SK-N-SH (cell line): ENCODE measurements at regions of chr16 and their contacts with region 1.

Region 1: GRCh38 chr16:8567750-8568617 is 22.3 kb downstream of the TMEM114 start:
- DNase-seq: peak; percentile 85
- H3K4me3 ChIP-seq: peak overlapping the region in 1 of 2 experiments; percentile 39; a peak in 1 of 4 replicates
- H3K27ac ChIP-seq: no peak overlapping the region
- H3K4me1 ChIP-seq: peaks cover 3 to 11% of the 10 kb centered on the region in 2 experiments; a peak in 2 of 4 replicates
- H3K27me3 ChIP-seq: no peaks in the 10 kb centered on the region
- CTCF ChIP-seq: peak; percentile 98
- EP300 ChIP-seq: no peak
- RAD21 ChIP-seq: peak; percentile 99

Region 2: DNA sequence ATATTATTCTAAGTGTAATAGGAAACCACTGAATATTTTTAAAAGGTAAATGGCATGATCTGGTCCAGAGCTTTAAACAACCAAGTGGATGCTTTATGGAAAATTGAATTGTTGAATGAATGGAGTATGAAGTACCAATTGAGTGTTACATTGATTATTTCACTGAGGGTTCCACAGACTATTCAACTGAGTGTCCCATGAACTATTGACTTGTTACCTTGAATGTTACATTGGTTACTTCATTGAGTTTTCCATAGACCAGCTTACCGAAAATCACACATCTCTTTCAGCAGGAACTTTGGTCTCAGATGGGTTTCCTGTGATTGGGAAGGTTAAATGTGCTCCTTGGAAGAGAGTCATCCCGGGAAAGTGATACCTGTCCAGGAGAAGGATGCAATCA is 34.5 kb before region 1 on chr16:
- CTCF ChIA-PET with region 1: no interaction called
- POLR2A ChIA-PET with region 1: no interaction called
- DNase-seq: no peak
- H3K4me3 ChIP-seq: no peak overlapping the region
- H3K27ac ChIP-seq: no peak overlapping the region
- H3K4me1 ChIP-seq: no peaks in the 10 kb centered on the region
- H3K27me3 ChIP-seq: no peaks in the 10 kb centered on the region
- CTCF ChIP-seq: no peak
- EP300 ChIP-seq: no peak
- RAD21 ChIP-seq: no peak

Region 3: DNA sequence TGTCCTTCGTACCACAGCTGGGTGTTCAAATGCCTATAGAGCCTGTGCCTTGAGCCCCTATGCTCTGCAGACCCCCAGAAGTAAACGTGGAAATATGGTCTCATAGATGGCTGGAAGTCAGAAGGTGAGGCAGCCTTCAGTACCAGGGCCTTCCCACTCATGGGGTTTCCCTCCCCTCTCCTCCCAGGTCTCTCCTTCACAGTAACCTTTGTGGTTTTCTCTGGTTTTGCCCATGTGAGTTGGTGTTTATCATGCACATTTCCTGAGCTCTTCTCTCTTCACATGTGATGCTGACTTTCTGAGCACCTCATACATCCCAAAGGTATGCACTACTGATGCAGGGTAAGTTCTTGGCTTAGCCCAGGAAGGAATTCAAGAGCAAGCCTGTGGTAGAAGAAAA is 13.1 kb before region 1 on chr16:
- CTCF ChIA-PET with region 1: interaction called, 31 read pairs
- POLR2A ChIA-PET with region 1: no interaction called
- DNase-seq: no peak
- H3K4me3 ChIP-seq: no peak overlapping the region
- H3K27ac ChIP-seq: no peak overlapping the region
- H3K4me1 ChIP-seq: no peaks in the 10 kb centered on the region
- H3K27me3 ChIP-seq: no peaks in the 10 kb centered on the region
- CTCF ChIP-seq: no peak
- EP300 ChIP-seq: no peak
- RAD21 ChIP-seq: no peak

Region 4: GRCh38 chr16:8581831-8582580 is 14.0 kb after region 1 on chr16:
- CTCF ChIA-PET with region 1: interaction called, 17 read pairs
- POLR2A ChIA-PET with region 1: no interaction called
- DNase-seq: no peak
- H3K4me3 ChIP-seq: no peak overlapping the region
- H3K27ac ChIP-seq: no peak overlapping the region
- H3K4me1 ChIP-seq: no peaks in the 10 kb centered on the region
- H3K27me3 ChIP-seq: peaks cover 6% of the 10 kb centered on the region; the same call in 1 of the 2 replicates
- CTCF ChIP-seq: no peak
- EP300 ChIP-seq: no peak
- RAD21 ChIP-seq: no peak

Region 5: GRCh38 chr16:8634991-8635736 is 67.2 kb after region 1 on chr16:
- CTCF ChIA-PET with region 1: interaction called, 15 read pairs
- POLR2A ChIA-PET with region 1: no interaction called
- DNase-seq: peak; percentile 60
- H3K4me3 ChIP-seq: no peak overlapping the region; a peak in 1 of 4 replicates
- H3K27ac ChIP-seq: no peak overlapping the region; a peak in 1 of 4 replicates
- H3K4me1 ChIP-seq: peaks cover 0 to 5% of the 10 kb centered on the region in 2 experiments; a peak in 1 of 4 replicates
- H3K27me3 ChIP-seq: no peaks in the 10 kb centered on the region
- CTCF ChIP-seq: peak; percentile 70
- EP300 ChIP-seq: no peak
- RAD21 ChIP-seq: peak; percentile 61

Region 6: GRCh38 chr16:8655184-8655717 is 87.3 kb after region 1 on chr16:
- CTCF ChIA-PET with region 1: interaction called, 27 read pairs
- POLR2A ChIA-PET with region 1: no interaction called
- DNase-seq: no peak
- H3K4me3 ChIP-seq: no peak overlapping the region
- H3K27ac ChIP-seq: no peak overlapping the region
- H3K4me1 ChIP-seq: peaks cover 0 to 3% of the 10 kb centered on the region in 2 experiments; a peak in 1 of 4 replicates
- H3K27me3 ChIP-seq: no peaks in the 10 kb centered on the region
- CTCF ChIP-seq: peak; percentile 38
- EP300 ChIP-seq: no peak
- RAD21 ChIP-seq: peak; percentile 36

Region 7: DNA sequence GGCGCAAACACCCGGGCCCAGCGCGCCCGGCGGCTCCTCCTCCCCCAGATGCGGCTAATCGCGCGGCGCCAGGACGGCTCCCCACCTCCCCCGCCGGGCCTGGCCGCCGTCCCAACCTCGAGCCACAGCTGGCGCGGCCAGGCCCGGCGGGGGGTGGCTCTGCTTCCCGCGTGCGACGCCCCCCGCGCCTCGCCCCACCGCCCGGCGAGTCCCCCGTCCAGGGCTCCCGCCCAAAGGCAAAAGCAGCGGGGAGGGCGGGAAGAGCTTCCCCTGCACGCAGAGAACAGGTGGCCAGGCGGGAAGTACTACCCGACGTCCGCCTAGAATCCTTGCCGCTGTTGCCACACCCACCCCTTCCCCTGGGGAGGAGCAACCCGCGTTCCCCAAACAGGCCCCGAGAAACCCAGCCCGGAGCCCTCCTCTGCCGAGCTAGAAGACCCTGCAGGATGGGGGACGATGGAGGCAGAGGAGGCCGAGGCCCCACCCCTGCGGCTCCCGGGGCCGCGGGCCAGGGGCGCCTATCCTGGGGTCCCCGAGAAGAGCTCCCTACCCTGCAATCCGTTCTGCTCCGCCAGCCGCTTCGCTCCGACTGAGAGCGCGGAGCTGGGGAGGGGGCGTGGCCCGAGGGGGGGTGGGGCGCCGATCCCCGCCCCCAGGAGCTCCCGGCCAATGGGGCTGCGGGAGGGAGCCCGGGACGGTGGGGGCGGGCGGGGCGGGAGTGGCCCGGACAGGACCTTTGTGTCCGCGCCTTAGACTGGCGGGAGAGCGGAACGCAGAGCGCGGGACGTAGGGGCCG is 300.6 kb after region 1 on chr16 and contains the start of gene CARHSP1:
- CTCF ChIA-PET with region 1: interaction called, 13 read pairs
- POLR2A ChIA-PET with region 1: no interaction called
- DNase-seq: peak; percentile 99
- H3K4me3 ChIP-seq: peak within 1 kb of the TSS; percentile 62 to 81
- H3K27ac ChIP-seq: peak within 1 kb of the TSS; percentile 77 to 83
- H3K4me1 ChIP-seq: peaks cover 26 to 31% of the 10 kb centered on the region in 2 experiments; a peak in 2 of 4 replicates
- H3K27me3 ChIP-seq: no peaks in the 10 kb centered on the region
- CTCF ChIP-seq: no peak
- EP300 ChIP-seq: peak in 1 of 2 experiments; percentile 35; a peak in 1 of 4 replicates
- RAD21 ChIP-seq: no peak
- polyA plus RNA-seq, gene CARHSP1: 60.6 and 93.6 TPM in 2 replicates

Region 8: DNA sequence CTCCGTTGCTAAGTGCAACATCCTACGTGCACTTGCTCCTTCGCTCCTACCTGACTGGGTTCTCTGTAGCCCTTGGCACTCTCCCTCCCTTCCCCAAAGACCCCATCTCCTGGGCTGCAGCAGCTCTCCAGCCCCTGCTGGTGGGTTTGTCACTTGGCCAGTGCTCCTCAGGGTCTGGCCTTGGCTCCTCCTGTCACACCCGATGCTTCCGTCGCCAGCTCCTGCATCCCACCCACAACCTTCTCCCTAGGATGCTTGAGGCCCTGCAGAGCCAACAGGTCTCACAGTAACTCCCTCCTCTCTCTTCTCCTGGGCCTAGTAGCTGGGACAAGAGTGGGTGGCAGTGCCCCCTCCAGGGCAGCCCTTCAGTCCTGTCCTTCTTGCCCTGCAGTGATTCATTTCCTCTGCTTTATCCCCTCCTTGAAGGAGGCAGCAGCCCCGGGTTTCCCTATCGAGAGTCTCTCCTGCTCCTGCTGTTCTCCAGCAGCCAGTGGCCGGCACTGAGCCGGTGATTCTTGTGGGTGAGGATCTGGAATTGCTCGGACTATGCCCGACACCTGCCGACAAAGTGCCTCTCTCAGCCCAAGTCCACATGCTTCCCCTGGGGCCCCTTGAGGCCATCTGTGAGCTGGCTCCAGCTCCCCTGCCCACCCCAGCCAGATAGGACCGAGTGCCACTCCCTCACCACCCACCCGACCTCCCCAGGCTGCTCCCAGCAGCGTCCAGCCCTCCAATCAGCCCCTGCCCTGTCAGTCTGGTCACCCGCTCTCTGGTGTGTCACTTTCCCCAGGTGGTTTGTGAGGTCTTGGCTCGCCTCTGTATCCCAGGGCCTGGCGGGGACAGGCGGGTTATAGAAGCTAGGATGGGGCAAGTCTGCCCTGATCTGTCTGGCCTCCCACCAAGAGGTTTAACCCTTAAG is 317.9 kb after region 1 on chr16:
- CTCF ChIA-PET with region 1: interaction called, 45 read pairs
- POLR2A ChIA-PET with region 1: no interaction called
- DNase-seq: peak; percentile 69
- H3K4me3 ChIP-seq: no peak overlapping the region
- H3K27ac ChIP-seq: peak overlapping the region; percentile 1 to 27; a peak in 2 of 4 replicates
- H3K4me1 ChIP-seq: peaks cover 9 to 32% of the 10 kb centered on the region in 2 experiments; a peak in 2 of 4 replicates
- H3K27me3 ChIP-seq: no peaks in the 10 kb centered on the region
- CTCF ChIP-seq: no peak
- EP300 ChIP-seq: no peak
- RAD21 ChIP-seq: no peak